Naive thymus-derived CD8-positive, alpha-beta T cell (primary cell): ENCODE measurements at regions of chr1 and their contacts with region 1.

Region 1: GRCh38 chr1:25922056-25922969 is 16.1 kb upstream of the STMN1 start:
- DNase-seq: peak; percentile 26 to 79 (median 55)
- ATAC-seq: peak; percentile 84 to 88
- H3K4me3 Mint-ChIP-seq: peak overlapping the region; percentile 80 to 92 (median 90)
- H3K27ac Mint-ChIP-seq: peak overlapping the region; percentile 60 to 91 (median 85)
- H3K4me1 Mint-ChIP-seq: peaks cover 12 to 40% (median 32%) of the 10 kb centered on the region in 4 donors
- H3K27me3 Mint-ChIP-seq: peaks cover 0 to 2% (median 0%) of the 10 kb centered on the region in 5 donors

Region 2: GRCh38 chr1:25727635-25728330 is 194.5 kb before region 1 on chr1:
- POLR2A ChIA-PET with region 1: no interaction called
- DNase-seq: no peak
- ATAC-seq: no peak
- H3K4me3 Mint-ChIP-seq: peak overlapping the region in 4 of 10 donors; percentile 26 to 65 (median 42)
- H3K27ac Mint-ChIP-seq: peak overlapping the region in 8 of 10 donors; percentile 12 to 70 (median 56)
- H3K4me1 Mint-ChIP-seq: peaks cover 45 to 93% (median 78%) of the 10 kb centered on the region in 4 donors
- H3K27me3 Mint-ChIP-seq: peaks cover 0 to 12% (median 0%) of the 10 kb centered on the region in 5 donors

Region 3: DNA sequence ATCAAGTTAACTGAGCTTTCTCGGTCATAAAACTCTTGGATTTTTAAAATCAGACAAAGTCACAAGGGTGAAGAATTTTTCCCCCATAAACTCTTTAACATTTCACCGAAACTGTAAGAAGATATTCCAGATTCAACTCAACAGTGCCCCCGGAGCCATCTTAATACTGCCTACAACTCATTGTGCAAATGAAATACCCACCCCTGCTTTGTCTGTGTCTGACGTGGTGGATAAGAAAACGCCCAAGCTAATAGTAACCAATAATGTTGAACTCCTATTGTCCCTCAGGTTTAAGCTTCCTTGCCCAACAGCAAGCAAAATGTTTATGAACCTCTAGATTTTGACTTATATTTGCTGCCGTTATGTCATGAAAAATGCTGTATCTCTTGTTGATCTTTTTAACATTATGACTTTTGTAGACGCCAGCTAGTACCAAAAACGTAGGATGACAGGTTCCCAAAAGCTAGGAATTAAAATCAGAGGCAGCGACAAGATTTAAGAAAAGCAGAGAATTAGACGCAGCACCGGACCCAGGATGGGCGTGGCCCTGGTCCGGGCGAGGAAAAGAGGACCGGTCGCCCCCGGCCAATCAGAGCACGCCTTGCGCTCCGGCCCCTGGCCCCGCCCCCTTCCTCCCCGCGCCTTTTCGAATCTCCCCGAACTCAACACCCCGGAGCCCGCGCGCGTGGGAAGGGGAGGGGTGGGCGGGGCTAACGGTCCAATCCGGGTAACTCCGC is 17.2 kb before region 1 on chr1:
- POLR2A ChIA-PET with region 1: interaction called, 12 read pairs
- DNase-seq: peak; percentile 76 to 96 (median 88)
- ATAC-seq: peak; percentile 66 to 71
- H3K4me3 Mint-ChIP-seq: peak overlapping the region; percentile 84 to 98 (median 92)
- H3K27ac Mint-ChIP-seq: peak overlapping the region; percentile 84 to 97 (median 94)
- H3K4me1 Mint-ChIP-seq: peaks cover 8 to 26% (median 19%) of the 10 kb centered on the region in 4 donors
- H3K27me3 Mint-ChIP-seq: no peaks in the 10 kb centered on the region

Region 4: GRCh38 chr1:25933479-25934365 is 11.4 kb after region 1 on chr1:
- POLR2A ChIA-PET with region 1: no interaction called
- DNase-seq: no peak
- ATAC-seq: no peak
- H3K4me3 Mint-ChIP-seq: no peak overlapping the region
- H3K27ac Mint-ChIP-seq: peak overlapping the region in 2 of 10 donors; percentile 6 to 12
- H3K4me1 Mint-ChIP-seq: peaks cover 0 to 5% (median 5%) of the 10 kb centered on the region in 4 donors
- H3K27me3 Mint-ChIP-seq: no peaks in the 10 kb centered on the region

Region 5: DNA sequence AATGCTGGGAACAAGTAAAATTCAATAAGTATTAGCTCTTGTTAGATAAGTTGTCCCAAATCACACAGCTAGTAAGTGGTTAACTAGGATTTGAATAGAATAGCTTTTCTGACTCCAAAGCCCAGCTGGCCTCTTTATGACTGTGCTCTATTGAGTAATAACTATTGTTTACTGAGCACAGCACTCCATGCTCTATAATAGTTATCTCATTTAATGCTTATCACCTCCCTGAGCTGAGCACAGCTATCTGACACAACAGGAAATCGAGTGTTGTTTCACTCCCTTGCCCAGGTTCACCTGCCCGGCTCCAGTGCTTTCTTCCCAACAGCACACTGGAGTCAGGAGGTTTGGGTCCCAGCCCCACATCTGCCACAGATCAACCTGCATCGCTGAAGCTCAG is 22.7 kb after region 1 on chr1:
- POLR2A ChIA-PET with region 1: no interaction called
- DNase-seq: no peak
- ATAC-seq: no peak
- H3K4me3 Mint-ChIP-seq: no peak overlapping the region
- H3K27ac Mint-ChIP-seq: no peak overlapping the region
- H3K4me1 Mint-ChIP-seq: no peaks in the 10 kb centered on the region
- H3K27me3 Mint-ChIP-seq: no peaks in the 10 kb centered on the region